IMR-90 (cell line): ENCODE measurements at regions of chr15 and their contacts with region 1.

Region 1: DNA sequence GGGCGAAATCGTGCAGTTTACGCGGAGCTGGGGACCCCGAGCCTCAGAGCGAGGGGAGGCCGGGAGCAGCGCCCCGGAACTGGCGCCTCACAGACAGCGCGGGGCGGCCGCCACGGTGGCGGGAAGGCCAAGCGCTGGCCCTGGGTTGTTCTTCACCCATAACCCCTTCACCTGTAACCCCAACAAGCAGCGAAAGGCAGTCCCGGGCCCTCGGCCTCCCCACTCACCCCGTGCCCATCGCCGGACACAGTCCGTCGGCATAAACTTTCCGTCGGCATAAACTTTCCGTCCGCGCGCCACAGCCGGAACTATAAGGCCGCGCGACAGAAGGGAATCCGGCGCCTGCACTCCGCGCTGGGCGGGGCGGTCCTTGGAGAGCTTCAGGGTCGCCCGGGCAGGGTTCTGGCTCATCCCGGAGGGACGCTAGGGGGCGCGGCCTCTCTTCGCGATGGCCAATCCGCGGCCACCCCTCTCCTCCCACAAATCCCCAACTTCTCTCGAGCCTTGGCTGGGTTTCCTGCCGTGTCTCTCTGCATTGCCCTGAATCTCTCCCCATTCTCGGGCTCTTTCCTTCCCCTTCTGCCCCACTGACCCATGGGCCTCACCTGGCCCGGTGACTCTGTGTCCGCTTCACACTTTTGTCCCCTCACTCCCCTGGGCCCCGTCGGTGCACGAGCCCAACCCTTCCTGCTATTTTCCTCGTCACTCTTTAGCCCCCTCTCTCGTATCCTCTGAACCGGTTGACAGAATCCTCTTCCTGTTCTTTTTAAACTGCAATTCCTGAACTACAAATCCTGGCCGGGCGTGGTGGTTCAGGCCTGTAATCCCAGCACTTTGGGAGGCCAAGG is at the start of gene INTS14:
- DNase-seq: peak; percentile 95
- ATAC-seq: peak; percentile 100
- H3K4me3 ChIP-seq: peak within 1 kb of the TSS; percentile 71
- H3K27ac ChIP-seq: peak within 1 kb of the TSS; percentile 94
- H3K4me1 ChIP-seq: peaks cover 4% of the 10 kb centered on the region
- H3K27me3 ChIP-seq: no peaks in the 10 kb centered on the region
- CTCF ChIP-seq: peak; percentile 70
- POLR2A ChIP-seq: peak; percentile 91
- RAD21 ChIP-seq: peak; percentile 44
- total RNA-seq, gene INTS14: 22.9 and 33.9 TPM in 2 replicates

Region 2: GRCh38 chr15:65666257-65666656 is 55.2 kb after region 1 on chr15:
- CTCF ChIA-PET with region 1: no interaction called
- POLR2A ChIA-PET with region 1: no interaction called
- dilution Hi-C with region 1: no loop called
- in situ Hi-C with region 1: no loop called
- intact Hi-C with region 1: no loop called
- DNase-seq: peak; percentile 88
- ATAC-seq: no peak
- H3K4me3 ChIP-seq: no peak overlapping the region
- H3K27ac ChIP-seq: no peak overlapping the region
- H3K4me1 ChIP-seq: 0 out of 2 replicates have a peak, but pooled peaks cover 2% of the 10 kb centered on the region
- H3K27me3 ChIP-seq: no peaks in the 10 kb centered on the region
- CTCF ChIP-seq: no peak
- POLR2A ChIP-seq: no peak
- RAD21 ChIP-seq: no peak

Region 3: DNA sequence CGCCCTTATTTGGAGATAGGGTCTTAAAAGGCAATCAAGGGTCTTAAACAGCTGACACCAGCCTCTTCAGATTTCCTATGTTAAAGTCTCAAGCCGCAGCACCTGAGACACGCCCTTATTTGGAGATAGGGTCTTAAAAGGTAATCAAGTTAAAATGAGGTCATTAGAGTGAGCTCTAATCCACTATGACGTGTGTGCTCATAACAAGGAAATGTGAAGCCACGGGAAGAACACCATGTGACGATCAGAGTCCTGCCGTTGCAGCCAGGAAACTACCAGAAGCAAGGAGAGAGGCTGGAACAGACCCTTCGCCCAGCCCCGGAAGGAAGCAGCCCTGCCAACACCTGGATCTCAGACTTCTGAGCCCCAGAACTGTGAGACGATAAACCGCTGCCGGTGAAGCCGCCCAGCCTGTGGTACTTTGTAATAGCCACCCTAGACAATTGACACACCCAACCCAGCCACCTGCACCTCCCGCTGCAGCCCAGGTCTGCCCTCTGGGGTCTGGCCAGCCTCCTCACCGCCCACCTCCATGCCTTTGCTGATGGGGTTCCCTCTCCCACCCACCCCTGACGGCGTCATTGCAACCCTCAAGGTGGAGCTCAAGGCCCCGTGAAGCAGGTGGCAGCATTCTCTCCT is 504.6 kb after region 1 on chr15:
- CTCF ChIA-PET with region 1: no interaction called
- POLR2A ChIA-PET with region 1: no interaction called
- dilution Hi-C with region 1: no loop called
- in situ Hi-C with region 1: no loop called
- intact Hi-C with region 1: no loop called
- DNase-seq: no peak
- ATAC-seq: no peak
- H3K4me3 ChIP-seq: no peak overlapping the region
- H3K27ac ChIP-seq: no peak overlapping the region
- H3K4me1 ChIP-seq: no peaks in the 10 kb centered on the region
- H3K27me3 ChIP-seq: peaks cover 44% of the 10 kb centered on the region
- CTCF ChIP-seq: no peak
- POLR2A ChIP-seq: no peak
- RAD21 ChIP-seq: no peak

Region 4: DNA sequence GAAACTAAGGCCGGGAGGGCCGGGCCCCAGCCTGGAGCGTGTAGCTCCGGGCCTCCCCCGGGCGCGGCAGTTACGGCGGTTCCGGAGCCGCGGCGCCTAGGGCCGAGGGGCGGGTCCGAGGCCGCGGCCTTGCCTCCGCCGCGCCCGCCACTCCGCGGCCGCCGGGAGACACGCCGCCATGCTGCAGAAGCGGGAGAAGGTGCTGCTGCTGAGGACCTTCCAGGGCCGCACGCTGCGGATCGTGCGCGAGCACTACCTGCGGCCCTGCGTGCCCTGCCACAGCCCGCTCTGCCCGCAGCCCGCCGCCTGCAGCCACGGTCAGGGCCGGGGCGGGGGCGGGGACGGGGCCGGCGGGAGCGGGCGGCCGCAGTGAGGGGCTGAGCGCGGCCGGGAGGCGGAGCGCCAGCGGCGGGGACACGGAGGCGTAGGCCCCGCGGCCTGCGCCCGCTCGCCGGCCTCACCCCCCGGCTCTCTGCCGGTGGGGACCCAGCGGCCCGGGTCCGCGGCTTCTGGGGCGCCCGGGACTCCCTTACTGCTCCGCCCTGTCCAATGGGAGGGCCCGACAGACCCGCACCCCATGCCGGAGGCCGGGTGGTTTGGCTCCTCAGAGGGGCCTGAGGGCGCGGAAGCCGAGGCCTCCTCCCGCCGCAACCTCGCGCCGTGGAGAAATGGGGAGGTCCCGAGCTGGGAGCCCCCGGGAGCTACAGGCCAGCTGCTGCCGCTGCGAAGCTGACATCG is 682.5 kb after region 1 on chr15 and contains the start of gene DIS3L:
- CTCF ChIA-PET with region 1: no interaction called
- POLR2A ChIA-PET with region 1: no interaction called
- dilution Hi-C with region 1: no loop called
- in situ Hi-C with region 1: loop called (anchors 25 kb)
- intact Hi-C with region 1: no loop called
- DNase-seq: peak; percentile 20
- ATAC-seq: peak; percentile 79
- H3K4me3 ChIP-seq: peak within 1 kb of the TSS; percentile 86
- H3K27ac ChIP-seq: peak within 1 kb of the TSS; percentile 85
- H3K4me1 ChIP-seq: peaks cover 12% of the 10 kb centered on the region
- H3K27me3 ChIP-seq: no peaks in the 10 kb centered on the region; the same call in 1 of the 2 replicates
- CTCF ChIP-seq: no peak
- POLR2A ChIP-seq: no peak
- RAD21 ChIP-seq: no peak
- total RNA-seq, gene DIS3L: 12.2 and 14.5 TPM in 2 replicates

Region 5: GRCh38 chr15:66700802-66701421 is 1089.8 kb after region 1 on chr15:
- CTCF ChIA-PET with region 1: no interaction called
- POLR2A ChIA-PET with region 1: no interaction called
- dilution Hi-C with region 1: no loop called
- in situ Hi-C with region 1: no loop called
- intact Hi-C with region 1: no loop called
- DNase-seq: peak; percentile 91
- ATAC-seq: peak; percentile 80
- H3K4me3 ChIP-seq: peak overlapping the region; percentile 68
- H3K27ac ChIP-seq: peak overlapping the region; percentile 90
- H3K4me1 ChIP-seq: peaks cover 9% of the 10 kb centered on the region
- H3K27me3 ChIP-seq: no peaks in the 10 kb centered on the region
- CTCF ChIP-seq: no peak
- POLR2A ChIP-seq: no peak; the same call in 1 of the 2 replicates
- RAD21 ChIP-seq: no peak